Activated T-helper 1 cell treated with anti-CD3 and anti-CD28 coated beads, Interleukin-12 subunit alpha, Interleukin-12 subunit beta, Interleukin-2, Interleukin-4 antibody, amounts not matched to agents 30 ng/mL and 10 ng/mL and 1 ng/mL, durations not matched to agents 14 hours and 24 hours and 36 hours (primary cell): ENCODE measurements at regions of chr6 and their contacts with region 1.

Region 1: DNA sequence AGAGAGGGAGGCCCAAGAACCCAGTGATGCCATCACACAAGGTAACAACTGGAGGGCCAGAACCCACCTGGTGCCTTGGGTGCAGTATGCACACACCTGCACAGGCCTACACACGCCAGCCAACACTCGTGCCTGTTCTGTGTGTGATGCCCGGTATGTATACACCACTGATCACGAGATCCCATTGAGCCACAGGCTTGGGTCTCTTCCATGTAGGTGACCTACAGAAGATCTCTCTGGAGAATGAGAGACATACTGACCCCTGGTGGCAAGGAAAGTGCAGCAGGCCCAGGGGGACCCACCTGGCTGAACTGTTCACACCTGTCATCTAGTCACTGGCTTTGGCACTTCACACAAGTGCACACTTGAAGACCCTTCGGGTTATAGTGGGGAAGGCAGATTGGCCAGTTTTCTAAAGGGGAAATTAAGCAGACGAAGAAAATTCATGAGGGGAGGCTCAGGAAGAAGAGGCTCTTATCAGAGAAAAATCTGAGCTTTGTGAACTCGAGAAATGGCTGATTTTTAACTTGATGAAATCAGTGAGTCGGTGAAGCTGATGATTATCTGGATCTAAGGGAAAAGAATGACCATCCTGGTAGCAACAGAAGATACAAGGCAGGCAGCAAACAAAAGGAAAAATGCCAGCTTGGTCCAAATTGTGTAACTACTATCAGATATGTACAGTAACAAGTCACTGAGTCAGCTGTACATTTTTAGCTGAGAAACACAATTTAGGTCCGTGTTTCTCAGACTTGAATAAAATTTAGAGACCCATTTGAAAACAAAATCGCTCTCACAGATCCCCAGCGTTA is 69.1 kb upstream of the PBOV1 start:
- DNase-seq: no peak
- H3K4me3 Mint-ChIP-seq: no peak overlapping the region
- H3K27ac Mint-ChIP-seq: no peak overlapping the region
- H3K4me1 Mint-ChIP-seq: peaks cover 13% of the 10 kb centered on the region
- H3K27me3 Mint-ChIP-seq: no peaks in the 10 kb centered on the region

Region 2: DNA sequence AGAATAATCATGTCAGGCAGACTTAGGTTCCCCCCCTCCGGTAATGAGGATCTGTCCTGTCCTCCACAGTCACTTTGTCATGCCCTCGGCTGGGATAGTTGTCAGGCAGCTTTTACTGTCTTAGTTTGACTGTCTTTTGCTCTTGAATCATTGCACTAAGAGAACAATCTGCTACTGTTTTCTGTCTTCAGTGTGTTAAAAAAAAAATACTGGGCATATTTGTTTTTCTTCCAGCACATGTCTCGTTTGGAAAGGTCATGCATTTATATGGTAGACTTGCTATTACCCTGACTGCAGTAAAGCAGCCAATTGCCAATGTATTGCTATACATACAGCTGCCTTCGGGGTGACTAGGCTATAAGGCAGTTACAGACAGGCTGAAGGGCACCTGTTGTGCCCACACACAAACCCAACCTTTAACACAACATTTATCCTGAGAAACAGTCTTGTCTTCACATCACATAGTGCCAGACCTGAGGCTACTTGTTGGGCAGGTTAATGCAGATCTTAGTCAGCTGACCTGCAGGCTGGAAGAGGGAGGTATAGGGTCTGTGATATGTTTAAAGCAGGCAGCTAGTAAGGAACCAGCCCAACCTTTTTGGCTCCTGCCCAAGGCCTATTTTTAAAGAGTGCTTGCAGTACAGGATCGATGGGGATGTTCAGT is 98.9 kb before region 1 on chr6:
- intact Hi-C with region 1: no loop called
- DNase-seq: no peak
- H3K4me3 Mint-ChIP-seq: no peak overlapping the region
- H3K27ac Mint-ChIP-seq: no peak overlapping the region
- H3K4me1 Mint-ChIP-seq: no peaks in the 10 kb centered on the region
- H3K27me3 Mint-ChIP-seq: peaks cover 5% of the 10 kb centered on the region

Region 3: DNA sequence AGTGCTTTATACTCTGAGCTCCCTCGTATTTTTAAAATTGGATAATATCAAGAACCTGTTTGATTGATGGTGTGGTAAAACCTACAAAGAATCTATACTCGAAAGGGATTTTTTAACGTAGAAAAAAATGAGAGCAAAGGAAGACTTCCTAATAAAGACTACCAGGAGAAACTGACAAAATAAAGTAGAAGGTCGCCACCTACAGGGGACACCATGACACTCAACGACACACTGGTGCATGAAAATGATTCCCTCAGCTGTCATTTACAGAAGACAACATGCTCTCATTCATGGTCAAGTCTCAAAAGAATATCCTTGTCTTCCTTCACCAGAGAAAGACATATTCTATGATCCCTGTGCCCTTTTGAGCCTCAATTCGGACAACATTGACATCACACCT is 222.0 kb after region 1 on chr6:
- intact Hi-C with region 1: loop called (anchors 5 kb)
- DNase-seq: peak; percentile 17
- H3K4me3 Mint-ChIP-seq: no peak overlapping the region
- H3K27ac Mint-ChIP-seq: no peak overlapping the region
- H3K4me1 Mint-ChIP-seq: peaks cover 7% of the 10 kb centered on the region
- H3K27me3 Mint-ChIP-seq: peaks cover 14% of the 10 kb centered on the region